Activated CD4-positive, alpha-beta T cell treated with anti-CD3 and anti-CD28 coated beads, Interleukin-2, amount 10 ng/mL, durations not matched to agents 7 days and 5 days (primary cell): ENCODE measurements at regions of chr2 and their contacts with region 1.

Region 1: GRCh38 chr2:218659258-218659987 is at the starts of genes BCS1L and ZNF142:
- DNase-seq: peak; percentile 95
- H3K4me3 Mint-ChIP-seq: peak within 1 kb of the TSS; percentile 95
- H3K27ac Mint-ChIP-seq: peak within 1 kb of the TSS; percentile 91
- H3K4me1 Mint-ChIP-seq: peaks cover 36% of the 10 kb centered on the region
- H3K27me3 Mint-ChIP-seq: no peaks in the 10 kb centered on the region
- total RNA-seq, gene BCS1L: 53.4 to 58.6 TPM
- total RNA-seq, gene ZNF142: 46.8 to 48.6 TPM

Region 2: GRCh38 chr2:218557941-218558340 is 101.5 kb before region 1 on chr2:
- CTCF ChIA-PET with region 1: no interaction called
- POLR2A ChIA-PET with region 1: no interaction called
- DNase-seq: no peak
- H3K4me3 Mint-ChIP-seq: no peak overlapping the region
- H3K27ac Mint-ChIP-seq: no peak overlapping the region
- H3K4me1 Mint-ChIP-seq: peaks cover 21% of the 10 kb centered on the region
- H3K27me3 Mint-ChIP-seq: no peaks in the 10 kb centered on the region

Region 3: GRCh38 chr2:218648088-218648786 is 11.2 kb before region 1 on chr2:
- CTCF ChIA-PET with region 1: interaction called, 18 read pairs
- POLR2A ChIA-PET with region 1: interaction called, 4 read pairs
- DNase-seq: peak; percentile 67
- H3K4me3 Mint-ChIP-seq: no peak overlapping the region
- H3K27ac Mint-ChIP-seq: peak overlapping the region; percentile 39
- H3K4me1 Mint-ChIP-seq: peaks cover 6% of the 10 kb centered on the region
- H3K27me3 Mint-ChIP-seq: no peaks in the 10 kb centered on the region

Region 4: GRCh38 chr2:218671654-218672566 is 12.5 kb after region 1 on chr2 and contains the starts of genes RNF25 and STK36:
- CTCF ChIA-PET with region 1: interaction called, 45 read pairs
- POLR2A ChIA-PET with region 1: no interaction called
- DNase-seq: peak; percentile 87
- H3K4me3 Mint-ChIP-seq: peak within 1 kb of the TSS; percentile 96
- H3K27ac Mint-ChIP-seq: peak within 1 kb of the TSS; percentile 93
- H3K4me1 Mint-ChIP-seq: peaks cover 26% of the 10 kb centered on the region
- H3K27me3 Mint-ChIP-seq: no peaks in the 10 kb centered on the region
- total RNA-seq, gene RNF25: 20.6 to 29.8 TPM
- total RNA-seq, gene STK36: 14.6 to 17.3 TPM